Naive thymus-derived CD8-positive, alpha-beta T cell (primary cell): ENCODE measurements at regions of chr7 and their contacts with region 1.

Region 1: DNA sequence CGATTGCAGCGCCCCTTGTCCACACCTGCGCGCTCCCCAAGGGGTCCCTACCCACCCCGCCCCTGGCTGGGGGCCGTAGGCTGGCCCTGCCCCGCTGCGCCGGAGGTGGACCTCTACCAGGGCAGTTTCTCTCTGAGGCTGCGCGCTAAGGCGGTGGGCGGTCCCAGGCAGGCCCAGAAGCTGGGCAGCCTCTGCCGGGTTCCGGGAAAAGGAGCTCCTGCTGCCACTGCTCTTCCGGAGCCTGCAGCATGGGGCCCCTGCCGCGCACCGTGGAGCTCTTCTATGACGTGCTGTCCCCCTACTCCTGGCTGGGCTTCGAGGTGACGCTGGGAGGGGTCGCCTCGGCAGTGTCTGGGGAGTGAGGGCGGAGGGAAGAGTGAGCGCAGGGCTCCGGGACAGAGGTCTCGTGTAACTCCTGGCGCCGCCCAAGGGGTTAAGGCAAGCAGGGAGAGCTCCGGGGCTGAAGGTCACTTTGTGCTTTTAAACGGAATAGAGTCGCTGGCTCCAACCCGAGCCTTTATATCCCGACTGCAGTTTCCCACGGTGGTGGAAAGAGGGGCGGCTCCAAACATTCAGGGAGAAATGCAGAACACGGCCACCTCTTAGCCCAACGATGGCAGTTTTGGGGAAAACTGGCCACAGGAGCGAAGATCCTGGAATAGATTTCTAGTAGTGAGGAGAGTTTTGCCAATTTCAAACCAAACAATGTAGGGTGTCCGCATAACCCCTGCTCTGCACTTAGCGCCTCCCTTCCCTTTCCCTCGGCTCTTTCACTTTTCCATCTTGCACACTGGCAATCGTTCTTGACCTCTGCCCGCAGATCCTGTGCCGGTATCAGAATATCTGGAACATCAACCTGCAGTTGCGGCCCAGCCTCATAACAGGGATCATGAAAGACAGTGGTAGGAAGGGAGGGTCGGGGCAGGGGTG is at the start of gene GSTK1:
- DNase-seq: peak; percentile 63 to 87 (median 72)
- ATAC-seq: peak; percentile 97
- H3K4me3 Mint-ChIP-seq: peak within 1 kb of the TSS; percentile 92 to 99 (median 96)
- H3K27ac Mint-ChIP-seq: peak within 1 kb of the TSS; percentile 94 to 97 (median 96)
- H3K4me1 Mint-ChIP-seq: peaks cover 36 to 70% (median 65%) of the 10 kb centered on the region in 4 donors
- H3K27me3 Mint-ChIP-seq: no peaks in the 10 kb centered on the region
- polyA plus RNA-seq, gene GSTK1: 310 to 355 (median 330) TPM

Region 2: GRCh38 chr7:143025371-143025770 is 238.2 kb before region 1 on chr7:
- POLR2A ChIA-PET with region 1: no interaction called
- DNase-seq: no peak
- ATAC-seq: no peak
- H3K4me3 Mint-ChIP-seq: no peak overlapping the region
- H3K27ac Mint-ChIP-seq: no peak overlapping the region
- H3K4me1 Mint-ChIP-seq: no peaks in the 10 kb centered on the region
- H3K27me3 Mint-ChIP-seq: peaks cover 6 to 18% (median 13%) of the 10 kb centered on the region in 5 donors

Region 3: DNA sequence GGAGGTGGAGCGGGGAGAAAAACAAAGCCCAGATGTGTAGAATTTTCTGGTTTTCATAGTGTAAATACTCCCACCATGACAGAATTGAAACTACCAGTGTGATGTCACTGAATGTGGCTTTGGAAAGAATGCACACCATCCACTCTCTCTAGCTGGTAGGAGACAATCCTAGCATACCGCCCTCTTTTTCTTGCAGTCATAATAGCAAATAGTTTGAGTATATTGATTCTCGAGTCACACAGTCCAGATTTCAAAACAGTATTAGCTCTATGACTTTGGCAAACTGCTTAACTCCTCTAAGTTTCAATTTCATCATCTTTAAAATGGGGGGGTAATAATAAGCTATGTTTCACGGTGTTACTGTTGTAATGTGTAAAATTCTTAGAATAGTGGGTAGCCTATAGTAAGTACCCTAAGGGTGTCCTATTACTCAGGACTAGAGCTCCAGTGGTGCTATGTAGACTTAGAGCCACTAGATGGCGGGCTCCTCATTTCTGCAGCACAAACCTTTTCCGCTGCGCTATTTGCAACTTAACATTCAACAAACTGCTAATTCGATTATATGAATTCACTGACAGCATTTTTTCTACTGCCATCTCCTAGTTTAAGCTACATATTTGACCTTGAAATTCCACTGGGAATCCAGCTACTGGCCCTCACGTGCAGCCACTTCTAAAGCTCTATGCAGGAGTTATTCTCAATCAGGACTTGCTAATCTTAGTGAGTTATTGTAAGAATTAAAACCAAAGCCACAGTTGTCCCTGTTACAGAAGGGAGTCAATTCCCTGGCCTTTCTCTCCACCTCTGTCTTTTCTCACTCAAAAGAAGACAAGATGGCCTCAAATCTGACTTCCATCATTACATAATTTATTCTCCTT is 23.0 kb before region 1 on chr7:
- POLR2A ChIA-PET with region 1: interaction called, 15 read pairs
- DNase-seq: peak; percentile 25 to 84 (median 73)
- ATAC-seq: peak; percentile 96 to 97
- H3K4me3 Mint-ChIP-seq: peak overlapping the region in 2 of 10 donors; percentile 14 to 24
- H3K27ac Mint-ChIP-seq: peak overlapping the region in 3 of 10 donors; percentile 46 to 66 (median 49)
- H3K4me1 Mint-ChIP-seq: peaks cover 13 to 35% (median 24%) of the 10 kb centered on the region in 4 donors
- H3K27me3 Mint-ChIP-seq: peaks cover 0 to 7% (median 2%) of the 10 kb centered on the region in 5 donors

Region 4: DNA sequence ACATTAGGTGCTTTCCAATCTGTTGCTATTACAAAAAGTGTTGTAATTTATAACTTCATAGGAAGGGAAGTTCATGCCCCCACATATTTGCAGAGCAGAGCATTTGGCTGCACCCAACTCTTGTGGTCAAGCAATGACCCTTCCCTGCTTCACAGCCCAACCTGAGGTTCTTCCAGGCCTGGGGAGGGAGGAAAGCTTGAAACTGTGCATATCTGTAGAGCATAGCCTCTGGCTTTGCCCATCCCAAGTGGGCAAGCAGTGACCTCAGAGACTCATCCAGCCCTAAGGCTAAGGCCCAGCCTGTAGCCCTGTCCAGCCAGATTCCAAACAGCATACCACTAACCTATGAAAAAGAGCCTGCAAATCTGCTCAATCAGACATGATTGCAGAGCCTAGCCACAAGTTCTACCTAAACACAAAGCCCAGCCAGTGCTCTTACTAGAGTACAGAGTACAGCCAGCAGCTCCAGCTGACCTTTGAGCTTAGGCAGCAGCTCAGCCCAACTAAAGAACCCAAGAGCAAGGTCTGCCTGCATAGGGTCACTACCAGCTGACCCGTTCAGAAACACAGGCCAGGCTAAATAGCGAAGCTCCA is 14.7 kb before region 1 on chr7:
- POLR2A ChIA-PET with region 1: interaction called, 12 read pairs
- DNase-seq: no peak
- ATAC-seq: no peak
- H3K4me3 Mint-ChIP-seq: peak overlapping the region in 4 of 10 donors; percentile 20 to 58 (median 46)
- H3K27ac Mint-ChIP-seq: peak overlapping the region in 8 of 10 donors; percentile 41 to 89 (median 67)
- H3K4me1 Mint-ChIP-seq: peaks cover 47 to 88% (median 85%) of the 10 kb centered on the region in 4 donors
- H3K27me3 Mint-ChIP-seq: no peaks in the 10 kb centered on the region

Region 5: DNA sequence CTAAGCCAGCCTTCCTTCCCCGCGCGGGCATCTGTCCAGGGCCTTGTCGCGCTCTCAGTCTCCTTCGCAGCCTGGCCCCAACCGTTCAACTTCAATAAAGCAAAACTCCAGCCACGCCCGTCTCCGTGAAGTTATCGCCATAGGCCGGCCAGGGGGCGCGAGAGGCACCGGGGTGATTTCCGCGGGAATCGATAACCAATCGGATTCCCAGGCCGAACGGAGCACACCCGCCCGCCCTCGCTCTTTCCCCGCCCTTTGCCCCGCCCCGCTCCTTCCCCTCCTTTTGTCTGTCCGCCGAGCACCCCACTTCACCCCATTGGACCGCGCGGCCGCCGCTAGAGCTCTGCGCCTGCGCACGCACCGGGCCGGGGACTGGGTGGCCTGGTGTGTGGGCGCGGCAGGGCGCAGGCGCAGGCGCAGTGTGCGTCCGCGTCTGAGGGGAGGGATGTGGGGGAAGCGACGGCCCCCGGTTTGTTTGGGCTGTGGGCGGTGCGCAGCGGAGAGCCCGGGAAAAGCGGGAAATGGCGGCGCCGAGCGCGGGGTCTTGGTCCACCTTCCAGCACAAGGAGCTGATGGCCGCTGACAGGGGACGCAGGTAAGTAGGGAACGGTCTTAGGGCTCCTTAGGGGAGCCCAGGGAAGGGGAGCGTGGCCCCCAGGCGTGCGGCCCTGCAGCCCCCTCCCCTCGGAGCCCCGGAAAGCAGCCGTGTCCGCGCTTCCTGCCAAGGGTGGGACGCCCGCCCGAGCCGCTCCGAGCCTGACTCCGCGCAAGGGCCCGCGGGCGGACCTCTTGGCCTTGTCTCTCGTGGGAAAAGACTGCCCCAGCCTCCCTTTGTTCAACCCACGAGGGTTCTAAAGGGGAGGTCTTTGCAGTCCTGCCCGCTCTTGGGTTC is 24.6 kb after region 1 on chr7 and contains the start of gene CASP2:
- POLR2A ChIA-PET with region 1: interaction called, 51 read pairs
- DNase-seq: peak; percentile 93 to 100 (median 99)
- ATAC-seq: peak; percentile 92 to 94
- H3K4me3 Mint-ChIP-seq: peak within 1 kb of the TSS; percentile 91 to 98 (median 96)
- H3K27ac Mint-ChIP-seq: peak within 1 kb of the TSS; percentile 89 to 98 (median 92)
- H3K4me1 Mint-ChIP-seq: peaks cover 32 to 62% (median 59%) of the 10 kb centered on the region in 4 donors
- H3K27me3 Mint-ChIP-seq: no peaks in the 10 kb centered on the region
- polyA plus RNA-seq, gene CASP2: 12.1 to 22.0 (median 14.6) TPM